Heart left ventricle (tissue), 16 donors: ENCODE measurements at regions of chr1 and their contacts with region 1.

Region 1: GRCh38 chr1:210233216-210234020 is 822 bp downstream of the SERTAD4 start:
- DNase-seq: peak; percentile 42 to 73 (median 45)
- ATAC-seq: peak in 3 of 4 donors; percentile 29 to 41 (median 33)
- H3K4me3 ChIP-seq: peak overlapping the region; percentile 57 to 84 (median 66)
- H3K27ac ChIP-seq: peak overlapping the region; percentile 50 to 96 (median 84)
- H3K4me1 ChIP-seq: peaks cover 0 to 50% (median 19%) of the 10 kb centered on the region in 12 donors
- H3K27me3 ChIP-seq: peaks cover 0 to 48% (median 0%) of the 10 kb centered on the region in 9 donors
- CTCF ChIP-seq: no peak
- POLR2A ChIP-seq: no peak

Region 2: GRCh38 chr1:210214573-210215409 is 18.6 kb before region 1 on chr1:
- intact Hi-C with region 1: loop called in 1 of 10 experiments (anchors 1 kb)
- DNase-seq: no peak
- ATAC-seq: no peak
- H3K4me3 ChIP-seq: no peak overlapping the region
- H3K27ac ChIP-seq: no peak overlapping the region
- H3K4me1 ChIP-seq: no peaks in the 10 kb centered on the region
- H3K27me3 ChIP-seq: no peaks in the 10 kb centered on the region
- CTCF ChIP-seq: no peak
- POLR2A ChIP-seq: no peak

Region 3: DNA sequence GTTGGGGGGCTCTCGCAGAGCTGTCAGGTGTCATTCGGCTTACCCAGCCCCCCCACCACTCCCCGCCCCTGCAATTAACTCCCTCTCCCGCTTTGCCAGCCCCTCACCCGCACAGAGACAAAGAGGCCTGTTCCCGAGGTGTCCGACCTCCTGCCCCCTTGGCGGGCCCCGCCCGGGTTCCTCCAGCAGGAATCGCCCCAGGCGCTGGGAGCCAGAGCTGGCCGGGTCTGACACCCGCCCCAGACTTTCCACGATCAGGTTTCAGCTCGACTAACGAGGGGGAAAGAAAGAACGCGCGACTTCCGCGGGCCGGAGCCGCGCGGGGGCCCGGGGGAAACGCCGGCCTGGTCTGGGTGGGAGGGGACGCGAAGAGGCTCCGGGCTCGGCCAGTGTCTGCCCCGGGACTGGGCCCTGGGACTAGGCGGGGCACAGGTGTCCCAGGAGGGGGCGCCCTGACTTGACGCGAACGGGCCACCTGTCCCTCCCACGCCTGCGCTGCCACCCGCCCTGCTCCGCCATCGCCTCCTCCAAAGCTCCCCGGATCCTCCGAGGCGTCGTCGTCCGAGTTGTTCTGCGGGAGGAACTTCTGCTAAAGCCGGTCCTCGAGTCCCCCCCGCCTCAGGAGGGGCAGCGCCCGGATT is 58.9 kb after region 1 on chr1:
- intact Hi-C with region 1: loop called in 5 of 10 experiments (anchors 5 to 10 kb)
- DNase-seq: peak; percentile 42 to 78 (median 62)
- ATAC-seq: peak; percentile 66 to 77 (median 75)
- H3K4me3 ChIP-seq: peak overlapping the region; percentile 24 to 60 (median 52)
- H3K27ac ChIP-seq: peak overlapping the region; percentile 36 to 90 (median 75)
- H3K4me1 ChIP-seq: peaks cover 0 to 47% (median 17%) of the 10 kb centered on the region in 12 donors
- H3K27me3 ChIP-seq: peaks cover 0 to 33% (median 0%) of the 10 kb centered on the region in 9 donors
- CTCF ChIP-seq: peak in 10 of 12 donors; percentile 18 to 56 (median 36)
- POLR2A ChIP-seq: no peak

Region 4: GRCh38 chr1:210301615-210302000 is 68.2 kb after region 1 on chr1:
- intact Hi-C with region 1: loop called in 5 of 10 experiments (anchors 2 to 10 kb)
- DNase-seq: no peak
- ATAC-seq: peak in 2 of 4 donors; percentile 26 to 62
- H3K4me3 ChIP-seq: no peak overlapping the region
- H3K27ac ChIP-seq: no peak overlapping the region
- H3K4me1 ChIP-seq: peaks cover 0 to 41% (median 0%) of the 10 kb centered on the region in 12 donors
- H3K27me3 ChIP-seq: peaks cover 0 to 3% (median 0%) of the 10 kb centered on the region in 9 donors
- CTCF ChIP-seq: no peak
- POLR2A ChIP-seq: no peak

Region 5: GRCh38 chr1:210328746-210329503 is 95.5 kb after region 1 on chr1 and contains the start of gene HHAT:
- intact Hi-C with region 1: loop called in 1 of 10 experiments (anchors 5 kb)
- DNase-seq: peak; percentile 84 to 93 (median 92)
- ATAC-seq: peak; percentile 77 to 95 (median 94)
- H3K4me3 ChIP-seq: peak within 1 kb of the TSS; percentile 63 to 89 (median 76)
- H3K27ac ChIP-seq: peak within 1 kb of the TSS; percentile 87 to 99 (median 97)
- H3K4me1 ChIP-seq: peaks cover 0 to 29% (median 15%) of the 10 kb centered on the region in 12 donors
- H3K27me3 ChIP-seq: no peaks in the 10 kb centered on the region
- CTCF ChIP-seq: peak in 4 of 12 donors; percentile 18 to 50 (median 31)
- POLR2A ChIP-seq: peak in 1 of 2 donors; percentile 50
- total RNA-seq, gene HHAT: 1.1 to 4.7 (median 2.9) TPM

Region 6: DNA sequence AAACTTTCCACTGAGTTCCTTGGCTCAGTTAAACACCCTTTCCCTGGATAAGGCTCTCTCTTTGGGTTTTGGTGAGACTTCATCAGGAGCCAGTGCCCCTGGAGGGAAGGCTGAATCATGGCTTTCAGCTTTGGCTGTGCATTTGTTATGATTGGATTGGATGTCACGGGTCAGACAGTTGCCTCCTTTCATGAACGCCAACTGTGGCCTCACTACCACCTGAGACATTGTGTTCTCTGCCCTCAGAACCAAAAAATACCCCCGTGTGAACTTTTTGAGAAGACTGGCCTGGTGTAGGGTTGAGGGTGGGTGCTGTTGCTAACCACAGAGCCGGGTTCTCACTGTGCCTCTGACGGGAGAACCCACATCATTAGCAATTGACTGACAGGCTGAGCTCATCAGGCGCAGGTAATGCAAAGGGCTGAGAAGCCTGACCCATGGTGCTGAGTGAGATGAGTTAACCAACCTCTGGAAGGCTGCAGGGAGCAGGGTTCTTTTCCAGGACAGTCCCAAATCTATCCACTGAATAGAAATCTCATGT is 160.9 kb after region 1 on chr1:
- intact Hi-C with region 1: loop called in 1 of 10 experiments (anchors 10 kb)
- DNase-seq: peak in 3 of 5 donors; percentile 18 to 63 (median 52)
- ATAC-seq: peak; percentile 54 to 90 (median 77)
- H3K4me3 ChIP-seq: no peak overlapping the region
- H3K27ac ChIP-seq: peak overlapping the region in 8 of 12 donors; percentile 27 to 72 (median 45)
- H3K4me1 ChIP-seq: peaks cover 0 to 23% (median 0%) of the 10 kb centered on the region in 12 donors
- H3K27me3 ChIP-seq: no peaks in the 10 kb centered on the region
- CTCF ChIP-seq: no peak
- POLR2A ChIP-seq: no peak